GM13977 (cell line): ENCODE measurements at regions of chr11 and their contacts with region 1.

Region 1: DNA sequence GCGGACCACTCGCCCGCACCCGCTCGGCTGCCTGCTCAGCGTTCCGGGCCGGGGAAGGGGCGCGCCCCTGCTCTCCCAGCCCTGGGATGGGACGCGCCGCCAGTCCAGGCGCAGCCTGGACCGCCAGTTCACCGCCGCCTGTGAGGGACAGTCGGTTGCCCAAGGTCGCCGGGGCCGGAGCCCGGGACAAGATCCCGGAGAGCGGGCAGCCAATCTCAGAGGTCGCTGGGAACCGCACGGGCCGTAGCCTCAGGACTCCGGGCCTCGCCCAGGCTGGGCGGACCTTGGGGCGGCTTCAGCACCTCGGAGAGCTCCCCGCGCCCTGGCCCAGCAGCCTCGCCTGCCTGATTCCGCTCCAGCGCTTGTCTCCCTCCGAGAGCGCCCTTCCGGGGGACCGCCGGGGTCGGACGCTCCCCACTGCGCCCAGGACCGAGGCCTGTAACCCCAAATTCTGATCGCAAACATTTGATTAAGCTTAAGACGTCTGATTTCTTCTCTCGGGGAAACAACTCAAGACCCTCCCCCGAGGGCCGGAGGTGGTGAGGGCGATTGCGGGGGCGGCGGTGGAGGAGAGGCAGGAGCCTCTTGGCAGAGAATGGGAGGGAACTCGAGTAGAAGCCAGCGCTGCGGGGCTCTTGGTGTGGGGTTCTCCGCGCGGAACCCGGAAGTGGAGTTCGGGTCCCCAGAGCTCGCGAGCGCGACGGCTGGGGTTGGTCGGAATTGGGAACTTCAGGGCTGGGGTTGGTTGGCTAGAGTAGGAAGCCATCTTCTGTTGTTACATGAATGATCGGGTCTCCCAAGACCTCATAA is 1.1 kb upstream of the CHRM4 start:
- DNase-seq: peak; percentile 98
- CTCF ChIP-seq: no peak

Region 2: DNA sequence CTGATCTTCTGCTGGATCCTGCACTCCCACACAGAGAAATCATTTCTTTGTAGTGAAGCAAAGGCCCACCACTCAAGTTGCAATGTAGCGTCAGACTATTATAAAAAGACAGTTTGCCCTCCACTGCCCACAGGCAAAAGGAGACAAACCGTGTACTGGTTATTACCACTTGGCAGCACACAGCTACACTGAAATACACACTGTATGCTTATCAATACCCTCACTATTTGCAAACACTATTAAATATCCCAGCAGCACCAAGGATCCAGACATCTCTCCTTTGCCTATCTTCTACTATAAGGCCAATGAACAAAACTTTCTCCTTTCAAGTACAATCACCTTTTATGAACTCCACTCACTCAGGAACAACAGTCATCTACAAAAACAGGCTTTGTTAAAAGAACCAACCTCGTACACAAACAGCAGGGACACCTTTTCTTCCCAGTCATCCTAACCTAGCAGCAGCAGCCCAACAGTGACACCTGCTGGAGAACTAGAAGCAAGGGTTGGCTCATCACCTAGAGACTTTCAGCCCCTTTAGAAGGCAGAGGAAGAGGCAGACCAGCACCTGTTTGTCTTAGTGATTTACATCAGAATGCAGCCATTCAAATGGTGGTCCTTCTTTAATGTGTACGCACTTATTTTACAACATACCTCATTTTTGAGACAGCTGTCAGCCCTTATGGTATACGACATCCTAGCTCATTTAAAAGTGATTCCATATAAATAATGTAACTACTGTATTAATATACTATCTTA is 145.1 kb after region 1 on chr11:
- in situ Hi-C with region 1: loop called (anchors 10 kb)
- DNase-seq: peak; percentile 71
- CTCF ChIP-seq: peak; percentile 88